H1 (cell line): ENCODE measurements at regions of chr16 and their contacts with region 1.

Region 1: DNA sequence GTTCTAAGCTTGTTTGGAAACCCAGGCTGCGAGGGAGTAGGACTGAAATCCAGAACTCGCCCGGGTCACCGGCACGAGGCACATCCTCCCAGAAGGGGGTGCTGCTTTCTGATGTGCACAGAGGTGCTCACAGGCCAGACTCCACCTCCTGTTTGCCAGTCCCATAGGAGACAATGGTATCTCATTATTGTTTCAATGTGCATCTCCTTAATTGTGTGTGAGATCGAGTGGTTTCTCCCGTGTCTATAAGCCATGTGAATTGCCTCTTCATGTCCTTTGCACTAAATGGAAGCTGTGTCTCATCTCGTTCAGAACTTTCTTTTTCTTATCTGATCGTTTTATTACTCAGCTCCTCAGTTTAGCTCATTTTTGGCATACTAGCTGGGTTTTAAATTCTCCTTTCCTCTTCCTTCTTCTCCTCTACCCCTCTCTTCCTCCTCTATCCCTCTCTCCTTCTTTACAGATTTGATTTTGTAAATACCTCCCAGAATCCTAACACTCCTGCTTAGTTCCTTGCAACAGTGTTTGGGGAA is 32.1 kb upstream of the PRKCB start:
- DNase-seq: peak; percentile 31 to 78
- H3K4me3 ChIP-seq: no peak overlapping the region
- H3K27ac ChIP-seq: no peak overlapping the region
- H3K4me1 ChIP-seq: no peaks in the 10 kb centered on the region
- H3K27me3 ChIP-seq: no peaks in the 10 kb centered on the region
- CTCF ChIP-seq: peak; percentile 83 to 86 (median 84)
- EP300 ChIP-seq: no peak
- POLR2A ChIP-seq: no peak
- RAD21 ChIP-seq: peak; percentile 76 to 78

Region 2: DNA sequence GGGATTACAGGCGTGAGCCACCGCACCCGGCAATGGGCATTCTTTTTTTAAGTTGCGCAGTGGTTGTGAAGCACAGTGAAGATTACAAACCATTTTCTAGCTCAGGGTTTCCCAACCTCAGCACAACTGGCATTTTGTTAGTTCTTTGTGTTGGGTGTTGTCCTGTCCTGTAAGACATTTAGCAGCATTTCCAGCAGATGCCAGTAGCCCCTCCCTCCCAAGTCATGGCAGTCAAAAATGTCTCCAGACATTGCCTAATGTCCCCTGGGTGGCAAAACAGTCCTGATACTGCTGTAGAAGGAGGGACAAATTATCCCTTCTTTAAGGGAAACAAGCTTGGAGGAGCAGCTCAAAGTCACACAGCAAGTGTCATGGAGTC is 109.4 kb before region 1 on chr16:
- CTCF ChIA-PET with region 1: no interaction called
- POLR2A ChIA-PET with region 1: no interaction called
- DNase-seq: no peak
- H3K4me3 ChIP-seq: peak overlapping the region; percentile 15 to 59 (median 51); a peak in 7 of 8 replicates
- H3K27ac ChIP-seq: no peak overlapping the region
- H3K4me1 ChIP-seq: peaks cover 0 to 5% (median 4%) of the 10 kb centered on the region in 4 experiments; a peak in 5 of 7 replicates
- H3K27me3 ChIP-seq: no peaks in the 10 kb centered on the region
- CTCF ChIP-seq: no peak
- EP300 ChIP-seq: no peak
- POLR2A ChIP-seq: no peak
- RAD21 ChIP-seq: no peak

Region 3: GRCh38 chr16:23716484-23716883 is 87.2 kb before region 1 on chr16:
- CTCF ChIA-PET with region 1: no interaction called
- POLR2A ChIA-PET with region 1: no interaction called
- DNase-seq: no peak
- H3K4me3 ChIP-seq: no peak overlapping the region
- H3K27ac ChIP-seq: no peak overlapping the region
- H3K4me1 ChIP-seq: no peaks in the 10 kb centered on the region; a peak in 1 of 7 replicates
- H3K27me3 ChIP-seq: peaks cover 2 to 21% (median 19%) of the 10 kb centered on the region in 4 experiments
- CTCF ChIP-seq: no peak
- EP300 ChIP-seq: no peak
- POLR2A ChIP-seq: no peak
- RAD21 ChIP-seq: no peak

Region 4: DNA sequence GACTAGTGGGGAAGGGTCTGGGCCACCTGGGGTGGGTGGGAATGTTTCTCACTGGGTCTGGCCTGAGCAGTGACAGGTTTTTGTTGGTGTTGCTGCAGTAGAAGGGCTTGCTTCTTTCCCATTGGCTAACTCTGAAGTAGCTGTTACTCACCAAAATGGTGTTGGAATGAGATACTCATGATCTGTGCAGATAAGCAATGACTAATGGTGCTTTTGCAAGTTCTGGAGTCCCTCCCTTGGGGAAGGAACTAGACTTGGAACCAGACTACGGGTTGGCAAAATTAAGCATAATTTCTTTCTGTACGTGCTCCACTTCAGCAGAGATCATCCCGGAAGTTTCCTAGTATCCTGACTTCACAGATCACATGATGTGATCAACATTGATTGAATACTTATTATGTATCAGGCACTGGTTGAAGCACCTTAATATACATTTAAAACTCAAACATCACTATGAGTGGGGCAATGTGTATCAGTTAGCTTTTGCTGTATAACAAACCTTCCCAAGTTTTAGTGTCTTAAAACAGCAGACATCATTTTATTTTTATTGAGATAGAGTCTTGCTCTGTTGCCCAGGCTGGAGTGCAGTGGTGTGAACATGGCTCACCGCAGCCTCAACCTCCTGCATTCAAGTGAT is 18.7 kb before region 1 on chr16:
- CTCF ChIA-PET with region 1: interaction called, 16 read pairs
- POLR2A ChIA-PET with region 1: interaction called, 6 read pairs
- DNase-seq: no peak
- H3K4me3 ChIP-seq: no peak overlapping the region
- H3K27ac ChIP-seq: no peak overlapping the region
- H3K4me1 ChIP-seq: peaks cover 3 to 23% (median 13%) of the 10 kb centered on the region in 4 experiments; a peak in 5 of 7 replicates
- H3K27me3 ChIP-seq: no peaks in the 10 kb centered on the region
- CTCF ChIP-seq: no peak
- EP300 ChIP-seq: no peak
- POLR2A ChIP-seq: no peak
- RAD21 ChIP-seq: no peak

Region 5: GRCh38 chr16:23821875-23822688 is 18.4 kb after region 1 on chr16:
- CTCF ChIA-PET with region 1: interaction called, 16 read pairs
- POLR2A ChIA-PET with region 1: no interaction called
- DNase-seq: no peak
- H3K4me3 ChIP-seq: no peak overlapping the region
- H3K27ac ChIP-seq: no peak overlapping the region
- H3K4me1 ChIP-seq: peaks cover 0 to 3% (median 0%) of the 10 kb centered on the region in 4 experiments; a peak in 2 of 7 replicates
- H3K27me3 ChIP-seq: no peaks in the 10 kb centered on the region
- CTCF ChIP-seq: no peak
- EP300 ChIP-seq: no peak
- POLR2A ChIP-seq: no peak
- RAD21 ChIP-seq: no peak

Region 6: DNA sequence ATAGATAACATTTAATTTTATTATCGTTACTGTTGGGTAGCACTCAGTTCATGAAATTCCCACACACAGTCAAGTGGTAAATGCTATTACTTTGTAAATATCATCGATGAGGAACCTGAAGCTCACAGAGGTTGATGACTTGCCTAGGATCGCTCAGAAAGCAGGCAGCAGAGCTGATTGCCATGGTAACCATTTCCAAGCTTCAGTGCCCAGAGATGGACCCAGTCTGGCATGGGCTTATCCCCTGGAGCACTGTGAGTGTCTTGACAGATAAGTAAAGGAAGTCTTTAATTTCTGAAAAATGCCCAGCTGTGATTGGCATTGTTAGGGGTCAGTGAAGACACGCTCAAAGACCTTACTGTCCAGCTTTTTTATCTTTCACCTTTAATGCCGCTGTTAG is 127.1 kb after region 1 on chr16:
- CTCF ChIA-PET with region 1: no interaction called
- POLR2A ChIA-PET with region 1: no interaction called
- DNase-seq: no peak
- H3K4me3 ChIP-seq: no peak overlapping the region
- H3K27ac ChIP-seq: no peak overlapping the region
- H3K4me1 ChIP-seq: no peaks in the 10 kb centered on the region; a peak in 1 of 7 replicates
- H3K27me3 ChIP-seq: no peaks in the 10 kb centered on the region
- CTCF ChIP-seq: no peak
- EP300 ChIP-seq: no peak
- POLR2A ChIP-seq: no peak
- RAD21 ChIP-seq: no peak